ENCODE measurements at regions of chr4 and their contacts with region 1.

Region 1: GRCh38 chr4:152535903-152536544 is at the start of gene FBXW7:
- DNase-seq: peak; percentile 100
- ATAC-seq: peak; percentile 86
- H3K4me3 Mint-ChIP-seq: peak within 1 kb of the TSS; percentile 98
- H3K27ac Mint-ChIP-seq: peak within 1 kb of the TSS; percentile 100
- H3K4me1 Mint-ChIP-seq: peaks cover 45% of the 10 kb centered on the region
- H3K27me3 Mint-ChIP-seq: no peaks in the 10 kb centered on the region
- total RNA-seq, gene FBXW7: 50.6 to 56.9 TPM

Region 2: DNA sequence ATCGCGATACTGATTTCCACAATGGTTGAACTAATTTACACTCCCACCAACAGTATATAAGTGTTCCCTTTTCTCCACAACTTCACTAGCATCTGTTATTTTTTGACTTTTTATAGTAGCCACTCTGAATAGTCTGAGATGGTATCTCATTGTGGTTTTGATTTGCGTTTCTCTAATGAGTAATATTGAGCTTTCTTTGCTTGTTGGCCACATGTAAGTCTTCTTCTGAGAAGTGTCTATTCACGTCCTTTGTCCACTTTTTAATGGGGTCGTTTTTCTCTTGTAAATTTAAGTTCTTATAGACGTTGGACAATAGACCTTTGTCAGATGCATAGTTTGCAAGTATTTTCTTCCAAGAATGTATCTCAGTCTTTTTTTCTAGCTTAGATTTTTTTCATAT is 10.2 kb before region 1 on chr4:
- CTCF ChIA-PET with region 1: interaction called, 3 read pairs
- POLR2A ChIA-PET with region 1: interaction called, 10 read pairs
- DNase-seq: no peak
- ATAC-seq: no peak
- H3K4me3 Mint-ChIP-seq: no peak overlapping the region
- H3K27ac Mint-ChIP-seq: no peak overlapping the region
- H3K4me1 Mint-ChIP-seq: peaks cover 54% of the 10 kb centered on the region
- H3K27me3 Mint-ChIP-seq: no peaks in the 10 kb centered on the region

Region 3: DNA sequence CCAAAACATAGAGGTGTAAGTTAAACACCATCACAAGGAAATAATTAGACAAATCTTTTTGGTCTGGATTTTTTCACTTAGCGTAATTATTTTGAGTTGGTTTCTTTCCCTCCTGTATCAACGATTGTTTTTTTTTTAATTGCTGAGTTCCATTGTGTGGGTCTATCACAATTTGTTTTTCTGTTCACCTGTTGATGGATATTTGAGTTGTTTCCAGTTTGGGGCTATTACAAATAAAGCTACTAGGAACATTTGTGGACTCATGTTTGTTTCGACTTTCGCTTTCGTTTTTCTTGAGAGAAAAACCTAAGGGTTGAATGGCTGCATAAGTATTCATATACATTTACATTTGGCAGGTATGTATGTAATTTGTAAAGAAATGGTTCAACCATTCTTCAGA is 20.3 kb after region 1 on chr4:
- CTCF ChIA-PET with region 1: interaction called, 50 read pairs
- POLR2A ChIA-PET with region 1: interaction called, 150 read pairs
- DNase-seq: no peak
- ATAC-seq: peak; percentile 17
- H3K4me3 Mint-ChIP-seq: peak overlapping the region; percentile 63
- H3K27ac Mint-ChIP-seq: peak overlapping the region; percentile 87
- H3K4me1 Mint-ChIP-seq: peaks cover 50% of the 10 kb centered on the region
- H3K27me3 Mint-ChIP-seq: peaks cover 2% of the 10 kb centered on the region

Region 4: GRCh38 chr4:152590179-152591031 is 54.4 kb after region 1 on chr4:
- CTCF ChIA-PET with region 1: interaction called, 3 read pairs
- POLR2A ChIA-PET with region 1: interaction called, 10 read pairs
- DNase-seq: no peak
- ATAC-seq: no peak
- H3K4me3 Mint-ChIP-seq: no peak overlapping the region
- H3K27ac Mint-ChIP-seq: no peak overlapping the region
- H3K4me1 Mint-ChIP-seq: peaks cover 9% of the 10 kb centered on the region
- H3K27me3 Mint-ChIP-seq: peaks cover 28% of the 10 kb centered on the region

Region 5: DNA sequence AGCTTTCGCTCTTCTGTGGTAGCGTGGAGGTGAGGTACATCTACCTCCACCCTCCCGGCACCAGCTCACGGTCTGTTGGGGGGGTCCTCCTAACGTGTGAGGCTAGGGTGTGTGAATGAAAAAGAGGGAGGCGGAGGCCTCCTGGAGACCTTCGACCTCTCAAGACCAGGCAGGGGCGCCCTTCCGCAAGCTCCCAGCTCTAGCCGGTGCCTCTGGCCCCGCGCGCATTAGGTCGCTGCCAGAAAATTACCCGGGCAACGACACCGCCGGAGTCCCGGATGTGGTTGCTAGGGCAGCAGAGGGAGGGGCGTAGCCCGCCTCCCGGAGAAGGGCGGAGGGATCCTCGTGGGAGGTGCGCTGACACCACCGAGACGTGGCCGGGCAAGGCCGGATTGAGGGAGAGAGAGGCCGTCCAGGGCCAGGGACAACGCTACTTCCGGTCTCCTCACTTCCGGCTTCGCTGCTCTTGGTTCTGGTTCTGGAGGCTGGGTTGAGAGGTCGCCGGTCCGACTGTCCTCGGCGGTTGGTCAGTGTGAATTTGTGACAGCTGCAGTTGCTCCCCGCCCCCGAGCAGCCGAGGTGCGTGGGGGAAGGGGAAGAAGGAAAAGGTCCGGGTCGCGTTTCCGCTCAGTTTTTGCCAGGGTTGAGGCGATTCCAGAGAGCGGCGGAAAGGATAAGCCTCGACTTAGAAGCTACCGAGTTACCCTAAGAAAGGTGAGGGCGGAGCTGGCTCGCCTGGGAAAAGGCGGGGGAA is 243.7 kb after region 1 on chr4 and contains the starts of genes ARFIP1 and TIGD4:
- CTCF ChIA-PET with region 1: no interaction called
- POLR2A ChIA-PET with region 1: interaction called, 15 read pairs
- DNase-seq: peak; percentile 97
- ATAC-seq: peak; percentile 90
- H3K4me3 Mint-ChIP-seq: peak within 1 kb of the TSS; percentile 92
- H3K27ac Mint-ChIP-seq: peak within 1 kb of the TSS; percentile 90
- H3K4me1 Mint-ChIP-seq: peaks cover 40% of the 10 kb centered on the region
- H3K27me3 Mint-ChIP-seq: peaks cover 12% of the 10 kb centered on the region
- total RNA-seq, gene ARFIP1: 20.3 to 20.5 TPM
- total RNA-seq, gene TIGD4: 0.40 to 0.44 TPM